ENCODE measurements at regions of chr20 and their contacts with region 1.

Region 1: GRCh38 chr20:38446441-38447209 is 11.5 kb upstream of the SNHG17 start:
- DNase-seq: peak; percentile 88 to 92 (median 90)
- H3K4me3 ChIP-seq: peak overlapping the region; percentile 68 to 94
- H3K4me3 Mint-ChIP-seq: peak overlapping the region; percentile 77 to 95 (median 86)
- H3K27ac ChIP-seq: peak overlapping the region; percentile 68
- H3K27ac Mint-ChIP-seq: peak overlapping the region; percentile 81 to 94 (median 89)
- H3K4me1 ChIP-seq: peaks cover 21% of the 10 kb centered on the region
- H3K4me1 Mint-ChIP-seq: peaks cover 11 to 39% (median 22%) of the 10 kb centered on the region in 4 donors
- H3K27me3 ChIP-seq: no peaks in the 10 kb centered on the region
- H3K27me3 Mint-ChIP-seq: peaks cover 0 to under 1% of the 10 kb centered on the region in 2 donors

Region 2: GRCh38 chr20:37007898-37008649 is 1438.6 kb before region 1 on chr20:
- CTCF ChIA-PET with region 1: no interaction called
- POLR2A ChIA-PET with region 1: no interaction called
- intact Hi-C with region 1: no loop called
- DNase-seq: peak; percentile 44 to 69 (median 62)
- H3K4me3 ChIP-seq: no peak overlapping the region
- H3K4me3 Mint-ChIP-seq: peak overlapping the region in 4 of 8 donors; percentile 29 to 66 (median 64)
- H3K27ac ChIP-seq: peak overlapping the region; percentile 26
- H3K27ac Mint-ChIP-seq: peak overlapping the region; percentile 43 to 92 (median 85)
- H3K4me1 ChIP-seq: peaks cover 17% of the 10 kb centered on the region
- H3K4me1 Mint-ChIP-seq: peaks cover 10 to 19% (median 15%) of the 10 kb centered on the region in 4 donors
- H3K27me3 ChIP-seq: no peaks in the 10 kb centered on the region
- H3K27me3 Mint-ChIP-seq: no peaks in the 10 kb centered on the region

Region 3: GRCh38 chr20:38033310-38034107 is 413.1 kb before region 1 on chr20 and contains the starts of genes RPRD1B and TTI1:
- CTCF ChIA-PET with region 1: no interaction called
- POLR2A ChIA-PET with region 1: no interaction called
- intact Hi-C with region 1: loop called (anchors 10 kb)
- DNase-seq: peak; percentile 90 to 94 (median 91)
- H3K4me3 ChIP-seq: peak within 1 kb of the TSS; percentile 74 to 96
- H3K4me3 Mint-ChIP-seq: peak within 1 kb of the TSS; percentile 95 to 100 (median 98)
- H3K27ac ChIP-seq: peak within 1 kb of the TSS; percentile 97
- H3K27ac Mint-ChIP-seq: peak within 1 kb of the TSS; percentile 99 to 100 (median 99)
- H3K4me1 ChIP-seq: peaks cover 76% of the 10 kb centered on the region
- H3K4me1 Mint-ChIP-seq: peaks cover 52 to 87% (median 65%) of the 10 kb centered on the region in 4 donors
- H3K27me3 ChIP-seq: no peaks in the 10 kb centered on the region
- H3K27me3 Mint-ChIP-seq: no peaks in the 10 kb centered on the region
- total RNA-seq, gene RPRD1B: 42.8 to 43.8 TPM
- total RNA-seq, gene TTI1: 26.1 to 26.6 TPM

Region 4: DNA sequence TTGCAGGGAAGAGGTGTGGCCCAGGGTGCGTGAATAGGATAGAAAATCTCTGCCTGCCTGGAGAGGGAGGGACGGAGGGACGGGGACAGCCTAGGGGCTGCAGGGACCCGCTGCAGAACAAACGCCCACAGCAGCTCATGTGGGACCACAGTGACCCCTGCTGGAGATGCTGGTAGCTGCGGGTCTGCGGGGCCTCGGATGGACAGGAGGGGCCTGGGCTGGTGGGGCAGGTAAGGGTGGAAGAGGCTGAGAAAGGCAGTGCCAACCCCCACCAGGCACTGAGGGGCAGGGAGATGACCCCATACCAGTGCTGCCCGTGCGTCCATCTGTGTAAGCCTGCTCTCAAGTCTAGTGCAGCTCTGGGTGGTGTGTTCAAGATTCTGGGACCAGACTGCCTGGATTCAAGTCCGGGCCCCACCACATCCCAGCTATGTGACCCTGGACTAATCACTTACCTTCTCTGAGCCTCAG is 225.5 kb before region 1 on chr20:
- CTCF ChIA-PET with region 1: no interaction called
- POLR2A ChIA-PET with region 1: no interaction called
- intact Hi-C with region 1: no loop called
- DNase-seq: peak; percentile 35 to 63 (median 49)
- H3K4me3 ChIP-seq: no peak overlapping the region
- H3K4me3 Mint-ChIP-seq: peak overlapping the region in 1 of 8 donors; percentile 36
- H3K27ac ChIP-seq: no peak overlapping the region
- H3K27ac Mint-ChIP-seq: peak overlapping the region in 1 of 7 donors; percentile 43
- H3K4me1 ChIP-seq: no peaks in the 10 kb centered on the region
- H3K4me1 Mint-ChIP-seq: peaks cover 0 to 6% (median 1%) of the 10 kb centered on the region in 4 donors
- H3K27me3 ChIP-seq: no peaks in the 10 kb centered on the region
- H3K27me3 Mint-ChIP-seq: peaks cover 4 to 7% of the 10 kb centered on the region in 2 donors

Region 5: GRCh38 chr20:38434743-38435554 is 11.7 kb before region 1 on chr20 and contains the start of gene SNHG17:
- CTCF ChIA-PET with region 1: interaction called, 105 read pairs
- POLR2A ChIA-PET with region 1: interaction called, 170 read pairs
- intact Hi-C with region 1: loop called (anchors 1 kb)
- DNase-seq: peak; percentile 86 to 90 (median 87)
- H3K4me3 ChIP-seq: peak within 1 kb of the TSS; percentile 64 to 88
- H3K4me3 Mint-ChIP-seq: peak within 1 kb of the TSS; percentile 91 to 97 (median 94)
- H3K27ac ChIP-seq: peak within 1 kb of the TSS; percentile 75
- H3K27ac Mint-ChIP-seq: peak within 1 kb of the TSS; percentile 95 to 98 (median 96)
- H3K4me1 ChIP-seq: peaks cover 30% of the 10 kb centered on the region
- H3K4me1 Mint-ChIP-seq: peaks cover 20 to 49% (median 37%) of the 10 kb centered on the region in 4 donors
- H3K27me3 ChIP-seq: no peaks in the 10 kb centered on the region
- H3K27me3 Mint-ChIP-seq: peaks cover 2 to 6% of the 10 kb centered on the region in 2 donors
- total RNA-seq, gene SNHG17: 46.0 to 49.8 TPM